Gastrocnemius medialis (tissue), 4 donors: ENCODE measurements at regions of chr13 and their contacts with region 1.

Region 1: DNA sequence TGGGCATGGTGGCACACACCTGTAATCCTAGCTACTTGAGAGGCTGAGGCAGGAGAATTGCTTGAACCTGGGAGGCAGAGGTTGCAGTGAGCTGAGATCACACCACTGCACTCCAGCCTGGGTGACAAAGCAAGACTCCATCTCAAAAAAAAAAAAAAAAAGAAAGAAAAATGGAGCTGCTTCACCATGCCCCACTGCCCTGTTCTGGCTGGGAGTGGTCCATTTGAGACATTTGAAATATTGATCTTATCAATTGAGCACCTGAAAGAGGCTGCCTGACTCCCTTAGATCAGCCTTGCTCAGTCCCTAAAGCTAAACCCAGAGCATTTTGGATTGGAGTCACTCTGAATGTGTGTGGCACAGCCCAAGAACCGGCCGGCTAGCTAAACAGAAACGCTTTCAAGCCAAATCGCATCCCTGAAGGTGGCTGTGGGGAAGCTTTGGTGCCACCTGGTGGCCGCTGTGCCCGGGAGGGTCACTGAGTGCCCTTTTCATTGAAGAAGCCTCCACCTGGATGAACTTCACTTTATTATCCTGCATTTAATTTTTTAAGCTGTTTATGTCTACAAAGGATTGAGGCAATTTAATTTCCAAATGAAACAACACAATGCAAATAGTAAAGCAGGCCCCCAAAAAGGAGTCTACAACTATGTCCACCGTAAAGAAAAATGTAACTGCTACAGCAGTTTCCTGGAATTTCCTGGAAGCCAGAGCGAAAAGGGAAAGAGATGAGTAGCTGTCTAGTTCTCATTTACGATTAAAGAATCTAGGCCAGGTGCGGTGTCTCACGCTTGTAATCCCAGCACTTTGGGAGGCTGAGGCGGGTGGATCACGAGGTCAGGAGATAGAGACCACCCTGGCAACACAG is 53.1 kb upstream of the SERPINE3 start:
- DNase-seq: peak; percentile 25 to 47
- ATAC-seq: peak; percentile 54 to 68
- H3K4me3 ChIP-seq: no peak overlapping the region
- H3K27ac ChIP-seq: no peak overlapping the region
- H3K4me1 ChIP-seq: no peaks in the 10 kb centered on the region
- H3K27me3 ChIP-seq: no peaks in the 10 kb centered on the region
- CTCF ChIP-seq: peak; percentile 57 to 92 (median 77)
- POLR2A ChIP-seq: no peak

Region 2: DNA sequence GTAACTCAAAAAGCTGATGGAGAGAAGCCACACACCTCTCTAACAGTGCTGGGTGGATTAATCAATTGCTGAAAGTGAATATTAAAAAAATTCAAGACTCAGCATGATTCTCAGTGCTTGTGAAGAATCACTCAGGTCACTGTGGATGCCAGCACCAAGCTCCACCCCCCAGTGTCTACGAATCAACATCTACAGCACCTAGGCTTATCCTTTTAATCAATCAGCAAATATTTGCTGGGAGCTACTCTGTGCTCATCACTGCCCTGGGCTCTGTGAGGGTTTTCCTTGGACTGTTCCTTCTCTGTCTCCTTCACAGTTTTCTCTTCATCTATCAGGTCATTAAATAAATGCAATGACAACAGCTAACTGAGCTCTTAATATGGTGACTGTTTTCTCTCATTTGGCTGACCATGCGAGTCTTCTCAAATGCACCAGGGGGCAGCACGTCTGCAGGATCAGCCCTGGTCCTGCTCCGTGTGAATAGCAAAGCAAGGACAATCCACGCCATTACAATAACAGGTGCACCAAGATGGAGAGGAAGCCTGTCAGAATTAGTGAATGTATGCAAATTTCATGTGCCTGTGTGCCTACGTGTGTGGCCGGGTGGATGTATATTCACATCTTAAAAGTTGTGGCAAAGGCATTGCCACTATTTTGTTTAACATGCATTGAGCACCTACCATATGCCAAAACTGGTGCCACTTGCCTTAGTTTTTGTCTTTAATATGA is 160.7 kb before region 1 on chr13:
- in situ Hi-C with region 1: loop called in 3 of 4 experiments (anchors 10 to 25 kb)
- intact Hi-C with region 1: loop called (anchors 1 kb)
- DNase-seq: no peak
- ATAC-seq: peak in 1 of 2 donors; percentile 36
- H3K4me3 ChIP-seq: no peak overlapping the region
- H3K27ac ChIP-seq: no peak overlapping the region
- H3K4me1 ChIP-seq: no peaks in the 10 kb centered on the region
- H3K27me3 ChIP-seq: no peaks in the 10 kb centered on the region
- CTCF ChIP-seq: peak; percentile 39 to 72 (median 59)
- POLR2A ChIP-seq: no peak

Region 3: DNA sequence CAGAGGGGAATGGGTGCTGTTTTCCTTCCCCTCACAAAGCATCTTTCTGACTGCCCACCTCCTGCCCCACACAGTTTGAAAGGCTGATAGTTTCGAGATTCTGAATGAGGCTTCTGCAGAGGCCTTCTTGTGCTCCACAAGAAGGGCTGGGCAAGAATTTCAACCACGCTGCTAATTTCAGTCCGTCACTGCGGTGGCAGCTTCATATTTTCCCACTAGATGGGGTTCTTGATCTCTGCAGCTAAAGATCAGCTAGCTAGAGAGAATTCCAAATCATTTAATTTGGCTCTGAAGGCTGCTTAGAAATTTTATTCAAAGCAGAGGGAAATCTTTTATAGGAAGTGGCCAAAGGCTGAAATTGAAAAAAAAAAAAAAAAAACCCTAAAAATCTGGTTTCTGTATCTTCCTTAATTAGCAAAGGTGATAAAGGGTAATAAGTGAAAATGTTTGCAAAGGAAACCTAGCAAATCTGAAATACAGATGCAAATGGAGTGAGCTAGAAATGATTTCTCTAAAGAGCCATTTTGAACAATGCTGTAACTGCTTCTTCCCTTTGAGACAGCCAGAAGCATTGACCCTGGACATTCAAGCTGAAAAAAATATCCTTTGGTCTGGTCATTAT is 137.3 kb before region 1 on chr13:
- in situ Hi-C with region 1: loop called in 1 of 4 experiments (anchors 10 kb)
- intact Hi-C with region 1: no loop called
- DNase-seq: no peak
- ATAC-seq: no peak
- H3K4me3 ChIP-seq: no peak overlapping the region
- H3K27ac ChIP-seq: no peak overlapping the region
- H3K4me1 ChIP-seq: no peaks in the 10 kb centered on the region
- H3K27me3 ChIP-seq: no peaks in the 10 kb centered on the region
- CTCF ChIP-seq: peak in 2 of 5 experiments; percentile 28 to 31
- POLR2A ChIP-seq: no peak

Region 4: GRCh38 chr13:51222037-51222685 is 64.2 kb before region 1 on chr13 and contains the start of gene FAM124A:
- in situ Hi-C with region 1: no loop called
- intact Hi-C with region 1: loop called (anchors 1 kb)
- DNase-seq: no peak
- ATAC-seq: peak; percentile 65 to 74
- H3K4me3 ChIP-seq: peak within 1 kb of the TSS; percentile 57 to 79 (median 66)
- H3K27ac ChIP-seq: peak within 1 kb of the TSS in 3 of 4 donors; percentile 4 to 45 (median 31)
- H3K4me1 ChIP-seq: peaks cover 0 to 4% of the 10 kb centered on the region in 2 donors
- H3K27me3 ChIP-seq: no peaks in the 10 kb centered on the region
- CTCF ChIP-seq: peak in 4 of 5 experiments; percentile 24 to 62 (median 39)
- POLR2A ChIP-seq: peak in 1 of 2 donors; percentile 10
- total RNA-seq, gene FAM124A: 0.66 to 2.0 (median 0.81) TPM